ENCODE measurements at regions of chr11 and their contacts with region 1.

Region 1: GRCh38 chr11:77091146-77091940 is 11.3 kb upstream of the OMP start:
- DNase-seq: peak; percentile 67 to 86 (median 78)
- ATAC-seq: peak; percentile 100
- H3K4me3 ChIP-seq: no peak overlapping the region
- H3K4me3 Mint-ChIP-seq: no peak overlapping the region
- H3K27ac ChIP-seq: no peak overlapping the region
- H3K27ac Mint-ChIP-seq: no peak overlapping the region
- H3K4me1 ChIP-seq: no peaks in the 10 kb centered on the region
- H3K4me1 Mint-ChIP-seq: peaks cover 2% of the 10 kb centered on the region
- H3K27me3 ChIP-seq: no peaks in the 10 kb centered on the region
- H3K27me3 Mint-ChIP-seq: no peaks in the 10 kb centered on the region
- CTCF ChIP-seq: peak; percentile 80

Region 2: GRCh38 chr11:76734456-76735420 is 356.6 kb before region 1 on chr11:
- CTCF ChIA-PET with region 1: no interaction called
- POLR2A ChIA-PET with region 1: no interaction called
- intact Hi-C with region 1: loop called in 1 of 2 experiments (anchors 5 kb)
- DNase-seq: no peak
- ATAC-seq: no peak
- H3K4me3 ChIP-seq: no peak overlapping the region
- H3K4me3 Mint-ChIP-seq: no peak overlapping the region
- H3K27ac ChIP-seq: no peak overlapping the region
- H3K27ac Mint-ChIP-seq: no peak overlapping the region
- H3K4me1 ChIP-seq: no peaks in the 10 kb centered on the region
- H3K4me1 Mint-ChIP-seq: no peaks in the 10 kb centered on the region
- H3K27me3 ChIP-seq: no peaks in the 10 kb centered on the region
- H3K27me3 Mint-ChIP-seq: peaks cover 4% of the 10 kb centered on the region
- CTCF ChIP-seq: no peak

Region 3: DNA sequence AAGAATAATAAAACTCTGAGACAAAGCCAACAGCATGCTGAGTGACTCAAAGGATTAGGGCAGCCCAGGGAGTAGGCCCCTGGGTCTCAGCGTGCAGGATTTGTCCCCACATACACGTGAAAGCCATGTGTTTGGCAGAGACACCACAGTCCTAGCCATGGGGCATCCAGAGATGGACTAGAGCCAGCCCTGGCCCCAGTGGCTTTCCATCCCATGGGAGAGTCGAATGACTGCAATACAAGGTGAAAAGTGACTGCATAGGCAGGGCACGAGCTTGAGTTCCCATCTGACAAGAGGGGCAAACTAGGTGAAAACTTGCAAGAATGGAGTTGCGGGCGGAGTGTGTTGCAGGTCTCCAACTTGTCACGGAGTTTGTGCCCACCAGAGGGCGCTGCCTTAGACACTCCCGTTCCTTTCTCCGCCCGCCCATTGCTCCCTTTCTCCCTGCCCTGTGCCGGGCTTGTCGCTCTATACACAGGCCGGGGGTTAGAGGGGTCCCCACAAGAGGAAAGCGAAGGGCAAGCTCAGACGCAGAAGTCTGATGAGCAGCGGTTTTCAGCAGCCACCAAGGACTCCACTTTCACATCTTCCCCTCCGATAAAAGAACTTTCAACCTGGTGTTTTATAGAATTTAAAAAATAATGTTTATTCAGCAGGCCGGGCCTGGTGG is 284.0 kb before region 1 on chr11:
- CTCF ChIA-PET with region 1: interaction called, 11 read pairs
- POLR2A ChIA-PET with region 1: no interaction called
- intact Hi-C with region 1: loop called in 1 of 2 experiments (anchors 5 kb)
- DNase-seq: peak; percentile 25 to 74 (median 66)
- ATAC-seq: peak; percentile 48
- H3K4me3 ChIP-seq: no peak overlapping the region
- H3K4me3 Mint-ChIP-seq: no peak overlapping the region
- H3K27ac ChIP-seq: no peak overlapping the region
- H3K27ac Mint-ChIP-seq: peak overlapping the region; percentile 32
- H3K4me1 ChIP-seq: peaks cover 18% of the 10 kb centered on the region
- H3K4me1 Mint-ChIP-seq: peaks cover 27% of the 10 kb centered on the region
- H3K27me3 ChIP-seq: peaks cover 0 to 11% of the 10 kb centered on the region in 2 experiments
- H3K27me3 Mint-ChIP-seq: peaks cover 21% of the 10 kb centered on the region
- CTCF ChIP-seq: peak; percentile 68

Region 4: GRCh38 chr11:76888989-76889388 is 202.4 kb before region 1 on chr11:
- CTCF ChIA-PET with region 1: no interaction called
- POLR2A ChIA-PET with region 1: no interaction called
- intact Hi-C with region 1: no loop called
- DNase-seq: no peak
- ATAC-seq: no peak
- H3K4me3 ChIP-seq: no peak overlapping the region
- H3K4me3 Mint-ChIP-seq: no peak overlapping the region
- H3K27ac ChIP-seq: no peak overlapping the region
- H3K27ac Mint-ChIP-seq: no peak overlapping the region
- H3K4me1 ChIP-seq: no peaks in the 10 kb centered on the region
- H3K4me1 Mint-ChIP-seq: peaks cover 6% of the 10 kb centered on the region
- H3K27me3 ChIP-seq: no peaks in the 10 kb centered on the region
- H3K27me3 Mint-ChIP-seq: no peaks in the 10 kb centered on the region
- CTCF ChIP-seq: no peak

Region 5: GRCh38 chr11:76919887-76920746 is 171.2 kb before region 1 on chr11:
- CTCF ChIA-PET with region 1: interaction called, 42 read pairs
- POLR2A ChIA-PET with region 1: no interaction called
- intact Hi-C with region 1: loop called in 1 of 2 experiments (anchors 1 kb)
- DNase-seq: peak; percentile 20 to 82 (median 54)
- ATAC-seq: peak; percentile 76
- H3K4me3 ChIP-seq: peak overlapping the region; percentile 34 to 56
- H3K4me3 Mint-ChIP-seq: peak overlapping the region; percentile 77
- H3K27ac ChIP-seq: no peak overlapping the region
- H3K27ac Mint-ChIP-seq: no peak overlapping the region
- H3K4me1 ChIP-seq: peaks cover 7% of the 10 kb centered on the region
- H3K4me1 Mint-ChIP-seq: peaks cover 8% of the 10 kb centered on the region
- H3K27me3 ChIP-seq: no peaks in the 10 kb centered on the region
- H3K27me3 Mint-ChIP-seq: no peaks in the 10 kb centered on the region
- CTCF ChIP-seq: peak; percentile 79

Region 6: DNA sequence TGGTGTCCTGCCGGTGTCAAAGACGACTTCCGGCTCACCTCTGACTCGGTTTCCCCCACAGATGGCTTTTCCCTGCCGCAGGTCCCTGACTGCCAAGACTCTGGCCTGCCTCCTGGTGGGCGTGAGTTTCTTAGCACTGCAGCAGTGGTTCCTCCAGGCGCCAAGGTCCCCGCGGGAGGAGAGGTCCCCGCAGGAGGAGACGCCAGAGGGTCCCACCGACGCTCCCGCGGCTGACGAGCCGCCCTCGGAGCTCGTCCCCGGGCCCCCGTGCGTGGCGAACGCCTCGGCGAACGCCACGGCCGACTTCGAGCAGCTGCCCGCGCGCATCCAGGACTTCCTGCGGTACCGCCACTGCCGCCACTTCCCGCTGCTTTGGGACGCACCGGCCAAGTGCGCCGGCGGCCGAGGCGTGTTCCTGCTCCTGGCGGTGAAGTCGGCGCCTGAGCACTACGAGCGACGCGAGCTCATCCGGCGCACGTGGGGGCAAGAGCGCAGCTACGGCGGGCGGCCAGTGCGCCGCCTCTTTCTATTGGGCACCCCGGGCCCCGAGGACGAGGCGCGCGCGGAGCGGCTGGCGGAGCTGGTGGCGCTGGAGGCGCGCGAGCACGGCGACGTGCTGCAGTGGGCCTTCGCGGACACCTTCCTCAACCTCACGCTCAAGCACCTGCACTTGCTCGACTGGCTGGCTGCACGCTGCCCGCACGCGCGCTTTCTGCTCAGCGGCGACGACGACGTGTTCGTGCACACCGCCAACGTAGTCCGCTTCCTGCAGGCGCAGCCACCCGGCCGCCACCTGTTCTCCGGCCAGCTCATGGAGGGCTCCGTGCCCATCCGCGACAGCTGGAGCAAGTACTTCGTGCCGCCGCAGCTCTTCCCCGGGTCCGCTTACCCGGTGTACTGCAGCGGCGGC is 51.6 kb before region 1 on chr11:
- CTCF ChIA-PET with region 1: interaction called, 39 read pairs
- POLR2A ChIA-PET with region 1: no interaction called
- intact Hi-C with region 1: loop called in 1 of 2 experiments (anchors 2 kb)
- DNase-seq: peak in 2 of 9 experiments; percentile 25 to 42
- ATAC-seq: peak; percentile 49
- H3K4me3 ChIP-seq: no peak overlapping the region
- H3K4me3 Mint-ChIP-seq: peak overlapping the region; percentile 54
- H3K27ac ChIP-seq: no peak overlapping the region
- H3K27ac Mint-ChIP-seq: no peak overlapping the region
- H3K4me1 ChIP-seq: peaks cover 5% of the 10 kb centered on the region
- H3K4me1 Mint-ChIP-seq: peaks cover 8% of the 10 kb centered on the region
- H3K27me3 ChIP-seq: peaks cover 5 to 12% of the 10 kb centered on the region in 2 experiments
- H3K27me3 Mint-ChIP-seq: peaks cover 52% of the 10 kb centered on the region
- CTCF ChIP-seq: no peak

Region 7: DNA sequence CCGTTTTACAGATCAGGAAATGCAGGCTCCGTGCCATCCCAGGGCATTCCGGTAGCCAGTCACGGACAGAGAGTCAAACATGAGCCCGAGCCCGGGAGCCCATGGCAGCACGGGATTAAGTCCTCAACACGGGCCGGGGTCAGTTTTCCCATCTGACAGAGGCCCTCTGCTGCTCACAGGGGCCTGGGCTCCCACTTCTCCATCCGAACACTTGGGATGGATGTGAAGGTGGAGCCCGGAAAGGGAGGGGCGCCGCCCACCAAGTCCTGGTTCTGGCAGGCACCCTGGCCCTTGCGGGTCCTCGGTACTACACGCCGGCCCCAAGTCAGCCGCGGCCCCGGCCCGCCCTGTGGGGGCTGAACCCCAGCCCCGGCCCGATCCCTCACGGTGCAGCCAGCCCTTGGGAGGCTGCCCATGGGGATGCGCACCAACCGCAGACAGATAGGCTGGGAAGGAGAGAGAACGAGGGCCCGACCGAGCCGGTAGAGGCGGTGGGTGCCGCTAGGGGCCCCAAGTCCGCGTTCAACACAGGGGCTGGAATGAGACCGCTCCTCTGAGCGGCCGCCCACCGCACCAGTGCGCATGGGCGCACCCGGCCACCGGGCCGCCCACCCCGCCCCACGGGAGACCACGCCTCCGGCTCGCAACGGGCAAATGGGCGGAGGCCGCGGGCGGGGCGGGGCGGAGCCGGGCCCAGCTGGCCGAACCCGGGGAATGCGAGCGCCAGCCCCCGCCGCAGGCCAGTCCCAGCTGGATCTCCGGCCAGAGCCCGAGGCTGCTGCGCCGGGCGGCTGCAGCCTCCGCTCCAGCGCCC is 24.9 kb before region 1 on chr11 and contains the start of gene CAPN5:
- CTCF ChIA-PET with region 1: interaction called, 37 read pairs
- POLR2A ChIA-PET with region 1: no interaction called
- intact Hi-C with region 1: loop called (anchors 1 kb)
- DNase-seq: peak; percentile 68 to 93 (median 88)
- ATAC-seq: peak; percentile 91
- H3K4me3 ChIP-seq: peak within 1 kb of the TSS; percentile 56 to 87
- H3K4me3 Mint-ChIP-seq: peak within 1 kb of the TSS; percentile 83
- H3K27ac ChIP-seq: peak within 1 kb of the TSS; percentile 32 to 48
- H3K27ac Mint-ChIP-seq: peak within 1 kb of the TSS; percentile 69
- H3K4me1 ChIP-seq: peaks cover 22% of the 10 kb centered on the region
- H3K4me1 Mint-ChIP-seq: peaks cover 25% of the 10 kb centered on the region
- H3K27me3 ChIP-seq: no peaks in the 10 kb centered on the region
- H3K27me3 Mint-ChIP-seq: no peaks in the 10 kb centered on the region
- CTCF ChIP-seq: peak; percentile 40
- total RNA-seq, gene CAPN5: 6.5 to 7.4 TPM

Region 8: GRCh38 chr11:77107950-77108349 is 16.6 kb after region 1 on chr11:
- CTCF ChIA-PET with region 1: interaction called, 12 read pairs
- POLR2A ChIA-PET with region 1: no interaction called
- intact Hi-C with region 1: no loop called
- DNase-seq: no peak
- ATAC-seq: no peak
- H3K4me3 ChIP-seq: no peak overlapping the region
- H3K4me3 Mint-ChIP-seq: no peak overlapping the region
- H3K27ac ChIP-seq: no peak overlapping the region
- H3K27ac Mint-ChIP-seq: no peak overlapping the region
- H3K4me1 ChIP-seq: no peaks in the 10 kb centered on the region
- H3K4me1 Mint-ChIP-seq: no peaks in the 10 kb centered on the region
- H3K27me3 ChIP-seq: no peaks in the 10 kb centered on the region
- H3K27me3 Mint-ChIP-seq: no peaks in the 10 kb centered on the region
- CTCF ChIP-seq: no peak

Measured in CD8-positive, alpha-beta T cell (primary cell).